HEK293 (cell line): ENCODE measurements at regions of chr9 and their contacts with region 1.

Region 1: DNA sequence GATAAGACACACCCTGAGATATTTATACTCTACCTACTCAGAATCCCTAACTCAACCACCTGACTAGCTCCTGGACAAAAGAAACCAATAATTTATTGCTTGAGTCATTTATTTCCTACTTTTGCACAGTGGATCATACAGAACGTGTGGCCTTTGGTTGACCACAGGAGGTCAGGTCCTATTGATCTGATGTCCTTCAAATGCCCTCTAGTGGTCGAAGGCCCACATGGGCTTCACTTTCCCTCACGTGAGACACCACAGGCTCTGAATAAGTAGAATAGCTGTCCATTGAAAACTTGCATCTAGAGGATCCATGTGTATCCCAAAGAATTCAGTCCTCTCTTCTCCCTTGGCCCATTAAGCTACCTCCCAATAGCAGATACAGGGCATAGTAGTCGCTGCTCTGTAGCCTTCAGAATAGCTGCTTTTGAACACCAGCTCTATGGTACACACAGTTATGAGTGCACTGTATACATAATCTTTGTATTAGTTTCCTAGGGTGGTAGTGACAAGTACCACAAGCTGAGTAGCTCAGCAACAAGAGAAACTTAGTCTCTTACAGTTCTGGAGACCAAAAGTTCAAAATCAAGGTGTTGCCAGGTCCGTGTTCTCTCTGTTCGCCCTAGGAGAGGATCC is 177.6 kb upstream of the SMARCA2 start:
- H3K4me3 ChIP-seq: no peak overlapping the region
- H3K27ac ChIP-seq: no peak overlapping the region
- H3K4me1 ChIP-seq: no peaks in the 10 kb centered on the region
- CTCF ChIP-seq: no peak

Region 2: DNA sequence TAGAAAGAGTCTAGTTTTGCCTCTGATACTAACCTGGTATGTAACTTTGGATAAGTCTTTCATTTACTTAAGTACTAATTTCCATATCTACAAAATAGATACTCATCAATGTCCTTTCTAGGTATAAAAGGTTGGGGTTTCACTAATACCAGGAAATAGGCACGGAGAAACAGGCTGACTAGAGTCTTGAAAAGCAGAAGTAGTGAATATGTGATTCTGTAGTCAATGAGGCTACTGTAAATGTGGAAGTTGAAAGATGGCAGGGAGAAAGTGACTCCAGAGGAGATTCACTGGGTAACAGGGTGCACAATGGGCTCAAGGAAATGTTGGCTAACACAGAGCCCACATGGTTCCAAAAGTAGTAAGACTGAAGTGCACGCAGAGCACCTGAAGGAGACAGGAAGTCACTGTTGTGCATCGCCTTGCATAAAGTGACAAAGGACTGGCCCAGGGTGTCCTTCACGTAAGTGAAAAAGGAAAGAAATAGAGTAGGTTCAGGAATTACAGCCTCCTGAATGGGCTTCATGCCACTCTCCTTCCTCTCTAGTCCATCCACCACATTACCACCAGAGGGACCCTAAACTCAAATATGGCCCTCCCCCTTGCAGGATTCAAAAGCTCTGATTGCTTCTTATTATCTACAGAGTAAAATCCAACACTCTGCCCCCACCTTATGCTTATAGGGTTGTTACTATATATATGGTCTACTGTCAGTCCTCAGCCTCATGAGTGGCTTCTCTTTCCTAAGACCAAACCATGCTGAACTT is 110.4 kb before region 1 on chr9:
- CTCF ChIA-PET with region 1: interaction called, 13 read pairs
- POLR2A ChIA-PET with region 1: no interaction called
- H3K4me3 ChIP-seq: no peak overlapping the region
- H3K27ac ChIP-seq: no peak overlapping the region
- H3K4me1 ChIP-seq: no peaks in the 10 kb centered on the region
- CTCF ChIP-seq: 0 out of 2 replicates have a peak, but pooled peaks have one; percentile 14

Region 3: GRCh38 chr9:1855726-1856125 is 18.2 kb after region 1 on chr9:
- CTCF ChIA-PET with region 1: interaction called, 29 read pairs
- POLR2A ChIA-PET with region 1: no interaction called
- H3K4me3 ChIP-seq: no peak overlapping the region
- H3K27ac ChIP-seq: no peak overlapping the region
- H3K4me1 ChIP-seq: no peaks in the 10 kb centered on the region
- CTCF ChIP-seq: no peak